A549 (cell line): ENCODE measurements at regions of chr22 and their contacts with region 1.

Region 1: DNA sequence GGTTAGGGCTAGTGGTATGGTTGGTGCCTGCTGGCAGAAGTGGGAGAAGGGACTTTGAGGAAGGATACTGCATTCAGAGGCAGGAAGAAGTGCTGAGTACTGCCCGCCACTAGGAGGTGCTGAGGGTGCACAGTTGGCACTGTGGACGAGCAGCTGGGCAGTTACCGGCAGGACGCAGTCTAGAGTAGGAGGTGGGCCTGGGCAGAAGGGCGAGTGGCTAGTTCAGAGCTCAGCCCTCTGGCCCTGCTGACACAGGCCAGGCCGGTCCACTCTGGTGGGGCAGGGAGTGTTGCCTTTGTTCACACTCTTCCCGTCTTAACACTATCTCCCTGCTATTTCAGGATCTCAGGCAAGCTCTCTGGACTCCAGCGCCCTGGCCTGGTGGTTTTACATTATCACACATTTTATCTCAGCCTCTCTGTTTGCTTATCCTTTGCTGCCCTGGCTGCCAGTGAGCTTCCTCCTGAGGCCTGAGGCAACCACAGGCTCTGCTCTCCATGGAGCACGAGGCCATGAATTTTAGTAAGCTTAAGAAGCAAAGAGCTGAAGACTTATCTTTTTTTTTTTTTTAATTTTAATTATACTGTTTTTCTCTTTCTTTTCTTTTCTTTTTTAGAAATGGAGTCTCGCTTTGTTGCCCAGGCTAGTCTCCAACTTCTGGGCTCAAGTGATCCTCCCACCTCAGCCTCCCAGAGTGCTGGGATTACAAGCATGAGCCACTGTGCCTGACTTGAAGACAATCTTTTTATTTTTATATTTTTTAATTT is 26.9 kb downstream of the SNAP29 start:
- DNase-seq: peak; percentile 83 to 85
- ATAC-seq: peak; percentile 99 to 100
- H3K4me3 ChIP-seq: no peak overlapping the region
- H3K27ac ChIP-seq: peak overlapping the region; percentile 75 to 83
- H3K4me1 ChIP-seq: peaks cover 6% of the 10 kb centered on the region
- CTCF ChIP-seq: peak; percentile 86
- EP300 ChIP-seq: no peak
- POLR2A ChIP-seq: peak; percentile 26
- RAD21 ChIP-seq: peak; percentile 85 to 92

Region 2: DNA sequence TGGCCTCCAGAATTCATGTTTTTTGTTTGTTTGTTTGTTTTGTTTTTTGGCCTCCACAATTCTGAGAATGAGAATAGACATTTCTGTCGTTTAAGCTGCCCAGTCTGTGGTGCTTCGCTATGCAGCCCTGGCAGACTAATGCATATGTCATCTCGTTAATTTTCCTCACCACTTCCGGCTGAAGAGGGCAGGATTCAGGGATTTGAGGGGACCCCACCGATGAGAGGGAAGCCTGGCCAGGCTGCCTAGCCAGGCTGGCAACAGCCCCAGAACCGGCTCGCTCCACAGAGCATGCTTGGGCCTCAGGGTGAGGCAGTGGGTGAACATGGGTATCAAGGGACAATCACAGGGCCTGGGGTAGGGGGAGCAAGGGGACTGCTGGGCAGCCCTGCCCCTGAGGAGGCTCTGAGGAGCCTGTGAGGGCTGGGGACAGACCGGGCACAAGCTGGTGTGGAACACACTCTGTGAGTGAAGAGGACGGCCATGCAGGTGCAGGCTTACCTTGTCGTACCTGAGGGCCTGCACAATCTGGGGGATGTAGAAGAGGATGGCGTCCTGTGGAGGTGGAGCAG is 159.7 kb before region 1 on chr22:
- CTCF ChIA-PET with region 1: no interaction called
- POLR2A ChIA-PET with region 1: no interaction called
- DNase-seq: no peak
- ATAC-seq: no peak; a peak in 1 of 6 replicates
- H3K4me3 ChIP-seq: no peak overlapping the region
- H3K27ac ChIP-seq: no peak overlapping the region
- H3K4me1 ChIP-seq: no peaks in the 10 kb centered on the region
- CTCF ChIP-seq: no peak
- EP300 ChIP-seq: no peak
- POLR2A ChIP-seq: no peak
- RAD21 ChIP-seq: no peak

Region 3: GRCh38 chr22:20803696-20804324 is 81.9 kb before region 1 on chr22:
- CTCF ChIA-PET with region 1: interaction called, 17 read pairs
- POLR2A ChIA-PET with region 1: no interaction called
- DNase-seq: peak; percentile 22 to 39
- ATAC-seq: peak; percentile 85 to 86; a peak in 5 of 6 replicates
- H3K4me3 ChIP-seq: no peak overlapping the region
- H3K27ac ChIP-seq: no peak overlapping the region
- H3K4me1 ChIP-seq: peaks cover 24% of the 10 kb centered on the region
- CTCF ChIP-seq: peak; percentile 51
- EP300 ChIP-seq: no peak
- POLR2A ChIP-seq: no peak
- RAD21 ChIP-seq: peak; percentile 64 to 78

Region 4: DNA sequence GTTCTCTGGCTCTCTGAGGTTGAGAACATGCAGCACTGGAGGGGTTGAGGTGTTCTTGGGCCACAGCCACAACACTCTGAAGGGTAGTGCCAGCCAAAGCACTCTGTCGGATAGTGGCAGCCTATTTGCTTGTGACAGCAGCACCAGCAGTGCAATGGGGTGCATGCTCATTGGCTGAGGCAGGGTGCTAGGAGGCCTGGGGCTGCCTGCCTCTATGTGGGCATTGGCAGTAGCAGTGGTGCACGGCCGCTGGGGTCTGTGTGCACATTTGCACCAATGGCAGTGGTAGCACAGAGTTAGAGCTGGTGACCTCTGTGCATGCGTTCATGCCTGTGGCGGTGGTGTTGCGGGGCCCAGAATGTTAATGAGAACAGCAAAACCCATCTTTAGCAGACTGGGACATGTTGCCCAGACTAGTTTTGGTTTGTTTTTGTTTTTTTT is 52.5 kb before region 1 on chr22:
- CTCF ChIA-PET with region 1: no interaction called
- POLR2A ChIA-PET with region 1: no interaction called
- DNase-seq: no peak
- ATAC-seq: no peak
- H3K4me3 ChIP-seq: no peak overlapping the region
- H3K27ac ChIP-seq: no peak overlapping the region
- H3K4me1 ChIP-seq: no peaks in the 10 kb centered on the region
- CTCF ChIP-seq: no peak
- EP300 ChIP-seq: no peak
- POLR2A ChIP-seq: no peak
- RAD21 ChIP-seq: no peak

Region 5: GRCh38 chr22:20904008-20904979 is 18.6 kb after region 1 on chr22:
- CTCF ChIA-PET with region 1: interaction called, 32 read pairs
- POLR2A ChIA-PET with region 1: interaction called, 3 read pairs
- DNase-seq: peak; percentile 48 to 82
- ATAC-seq: peak; percentile 82 to 99
- H3K4me3 ChIP-seq: no peak overlapping the region
- H3K27ac ChIP-seq: peak overlapping the region; percentile 62 to 86
- H3K4me1 ChIP-seq: peaks cover 23% of the 10 kb centered on the region
- CTCF ChIP-seq: no peak
- EP300 ChIP-seq: peak in 1 of 2 experiments; percentile 26; a peak in 1 of 5 replicates
- POLR2A ChIP-seq: no peak
- RAD21 ChIP-seq: no peak

Region 6: DNA sequence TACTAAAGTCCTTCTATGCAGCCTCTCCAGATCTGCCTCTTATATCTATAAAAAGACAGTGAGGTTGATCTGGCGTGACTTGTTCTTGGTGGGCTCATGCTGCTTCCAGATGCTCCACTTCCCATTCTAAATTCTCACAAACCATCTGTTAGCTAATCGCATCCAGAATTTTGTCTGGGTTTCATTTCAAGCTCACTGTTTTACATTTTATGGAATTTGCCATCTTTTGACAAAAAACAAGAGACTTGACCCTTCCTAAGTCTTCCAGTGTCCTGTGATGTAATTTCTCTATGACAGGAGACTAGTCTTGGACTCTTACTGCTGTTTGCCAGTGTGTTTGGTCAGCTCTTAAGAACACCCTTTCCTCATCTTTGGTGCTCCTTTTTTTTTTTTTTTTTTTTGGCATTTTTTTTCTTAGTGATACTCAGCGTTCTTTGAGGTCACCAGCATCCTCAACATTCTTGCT is 54.5 kb after region 1 on chr22:
- CTCF ChIA-PET with region 1: interaction called, 13 read pairs
- POLR2A ChIA-PET with region 1: no interaction called
- DNase-seq: no peak
- ATAC-seq: no peak
- H3K4me3 ChIP-seq: no peak overlapping the region
- H3K27ac ChIP-seq: no peak overlapping the region
- H3K4me1 ChIP-seq: peaks cover 21% of the 10 kb centered on the region
- CTCF ChIP-seq: no peak
- EP300 ChIP-seq: no peak
- POLR2A ChIP-seq: no peak
- RAD21 ChIP-seq: no peak

Region 7: GRCh38 chr22:20981787-20982562 is 96.2 kb after region 1 on chr22 and contains the start of gene LZTR1:
- CTCF ChIA-PET with region 1: interaction called, 7 read pairs
- POLR2A ChIA-PET with region 1: interaction called, 22 read pairs
- DNase-seq: peak; percentile 55 to 75
- ATAC-seq: peak; percentile 91 to 96
- H3K4me3 ChIP-seq: peak within 1 kb of the TSS; percentile 73
- H3K27ac ChIP-seq: peak within 1 kb of the TSS; percentile 92 to 97
- H3K4me1 ChIP-seq: peaks cover 11% of the 10 kb centered on the region; the same call in 2 of the 3 replicates
- CTCF ChIP-seq: peak; percentile 32; the same call in 1 of the 3 replicates
- EP300 ChIP-seq: no peak
- POLR2A ChIP-seq: peak; percentile 92
- RAD21 ChIP-seq: peak; percentile 8 to 23; a peak in 3 of 5 replicates
- polyA plus RNA-seq, gene LZTR1: 14.1 and 14.4 TPM in 2 replicates